Mammary epithelial cell (primary cell): ENCODE measurements at regions of chr2 and their contacts with region 1.

Region 1: GRCh38 chr2:26244309-26245121 is at the starts of genes HADHA and HADHB:
- DNase-seq: peak; percentile 90
- H3K4me3 ChIP-seq: peak within 1 kb of the TSS; percentile 89 to 94 (median 91)
- H3K27ac ChIP-seq: peak within 1 kb of the TSS; percentile 88
- H3K4me1 ChIP-seq: peaks cover 18% of the 10 kb centered on the region
- H3K27me3 ChIP-seq: no peaks in the 10 kb centered on the region
- CTCF ChIP-seq: peak; percentile 4 to 40
- total RNA-seq, gene HADHA: 155 to 174 TPM
- total RNA-seq, gene HADHB: 126 to 144 TPM

Region 2: DNA sequence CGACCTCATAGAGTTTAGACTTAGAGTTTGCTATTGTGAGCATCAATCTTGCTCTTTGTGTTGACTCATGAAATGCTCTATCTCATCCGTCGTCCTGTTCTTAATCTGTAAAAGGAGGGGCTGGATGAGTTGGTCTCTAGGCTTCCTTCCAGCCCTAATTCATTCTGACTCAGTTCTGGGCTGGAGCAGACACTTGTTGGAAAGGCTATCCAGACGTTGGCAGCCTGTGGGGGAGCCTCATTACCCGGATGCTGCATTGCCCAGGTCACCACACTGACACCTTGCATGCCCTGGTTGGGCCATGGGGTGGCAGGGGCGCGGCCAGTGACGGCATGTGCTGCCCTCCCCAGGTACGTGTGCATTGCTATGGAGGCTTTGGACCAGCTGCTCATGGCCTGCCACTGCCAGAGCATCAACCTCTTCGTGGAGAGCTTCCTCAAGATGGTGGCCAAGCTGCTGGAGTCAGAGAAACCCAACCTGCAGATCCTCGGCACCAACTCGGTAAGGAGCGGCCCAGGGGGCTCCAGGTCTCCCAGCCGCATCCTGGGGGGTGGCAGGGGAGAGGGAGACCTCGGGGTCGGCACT is 1141.1 kb before region 1 on chr2:
- CTCF ChIA-PET with region 1: no interaction called
- dilution Hi-C with region 1: no loop called
- in situ Hi-C with region 1: no loop called
- intact Hi-C with region 1: no loop called
- DNase-seq: peak; percentile 50
- H3K4me3 ChIP-seq: no peak overlapping the region
- H3K27ac ChIP-seq: no peak overlapping the region
- H3K4me1 ChIP-seq: peaks cover 15% of the 10 kb centered on the region
- H3K27me3 ChIP-seq: no peaks in the 10 kb centered on the region
- CTCF ChIP-seq: no peak

Region 3: GRCh38 chr2:26274058-26274613 is 29.6 kb after region 1 on chr2:
- CTCF ChIA-PET with region 1: no interaction called
- dilution Hi-C with region 1: no loop called
- in situ Hi-C with region 1: no loop called
- intact Hi-C with region 1: loop called (anchors 1 kb)
- DNase-seq: peak; percentile 100
- H3K4me3 ChIP-seq: no peak overlapping the region
- H3K27ac ChIP-seq: peak overlapping the region; percentile 97
- H3K4me1 ChIP-seq: peaks cover 37% of the 10 kb centered on the region
- H3K27me3 ChIP-seq: no peaks in the 10 kb centered on the region
- CTCF ChIP-seq: no peak

Region 4: GRCh38 chr2:26299471-26300101 is 55.1 kb after region 1 on chr2:
- CTCF ChIA-PET with region 1: interaction called, 5 read pairs
- dilution Hi-C with region 1: no loop called
- in situ Hi-C with region 1: no loop called
- intact Hi-C with region 1: loop called (anchors 1 kb)
- DNase-seq: peak; percentile 60
- H3K4me3 ChIP-seq: peak overlapping the region; percentile 40 to 54 (median 45)
- H3K27ac ChIP-seq: peak overlapping the region; percentile 60
- H3K4me1 ChIP-seq: peaks cover 39% of the 10 kb centered on the region
- H3K27me3 ChIP-seq: no peaks in the 10 kb centered on the region
- CTCF ChIP-seq: no peak

Region 5: GRCh38 chr2:26330113-26330549 is 85.6 kb after region 1 on chr2:
- CTCF ChIA-PET with region 1: interaction called, 5 read pairs
- dilution Hi-C with region 1: no loop called
- in situ Hi-C with region 1: loop called in 1 of 2 experiments (anchors 10 kb)
- intact Hi-C with region 1: loop called (anchors 1 kb)
- DNase-seq: peak; percentile 76
- H3K4me3 ChIP-seq: no peak overlapping the region
- H3K27ac ChIP-seq: no peak overlapping the region
- H3K4me1 ChIP-seq: peaks cover 10% of the 10 kb centered on the region
- H3K27me3 ChIP-seq: no peaks in the 10 kb centered on the region
- CTCF ChIP-seq: peak; percentile 94 to 95

Region 6: DNA sequence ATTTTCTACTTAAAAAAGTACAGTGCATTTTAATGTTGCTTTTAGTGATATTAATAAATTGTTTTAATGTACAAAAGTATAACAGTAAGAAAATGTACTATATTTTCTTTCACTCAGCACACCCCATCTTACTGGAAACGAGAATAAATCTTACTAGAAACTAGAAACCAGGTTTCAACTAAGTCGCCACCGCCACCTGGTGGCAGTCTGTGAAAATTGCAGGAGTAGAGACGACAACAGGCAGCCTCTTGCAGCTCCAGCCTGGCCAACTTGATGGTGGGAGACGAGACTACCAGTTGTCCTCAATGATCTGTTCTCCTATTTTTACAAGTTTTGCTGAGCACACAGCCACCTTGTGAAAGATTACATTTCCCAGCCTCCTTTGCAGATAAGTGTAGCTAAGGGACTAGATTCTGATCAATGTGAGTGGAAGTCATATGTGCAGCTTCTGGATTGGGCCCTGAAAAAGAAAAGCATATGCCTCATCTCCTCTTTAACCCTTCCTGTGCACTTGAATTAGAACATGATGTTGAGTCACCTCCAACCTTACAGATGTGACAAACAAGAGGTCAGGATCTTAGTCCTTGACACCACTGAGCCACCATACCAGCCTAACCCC is 224.7 kb after region 1 on chr2:
- CTCF ChIA-PET with region 1: no interaction called
- dilution Hi-C with region 1: no loop called
- in situ Hi-C with region 1: loop called in 1 of 2 experiments (anchors 25 kb)
- intact Hi-C with region 1: no loop called
- DNase-seq: peak; percentile 45
- H3K4me3 ChIP-seq: no peak overlapping the region
- H3K27ac ChIP-seq: no peak overlapping the region
- H3K4me1 ChIP-seq: no peaks in the 10 kb centered on the region
- H3K27me3 ChIP-seq: no peaks in the 10 kb centered on the region
- CTCF ChIP-seq: peak; percentile 80 to 88

Region 7: GRCh38 chr2:26569216-26570082 is 324.9 kb after region 1 on chr2:
- CTCF ChIA-PET with region 1: no interaction called
- dilution Hi-C with region 1: no loop called
- in situ Hi-C with region 1: no loop called
- intact Hi-C with region 1: loop called (anchors 5 kb)
- DNase-seq: no peak
- H3K4me3 ChIP-seq: no peak overlapping the region
- H3K27ac ChIP-seq: no peak overlapping the region
- H3K4me1 ChIP-seq: no peaks in the 10 kb centered on the region
- H3K27me3 ChIP-seq: no peaks in the 10 kb centered on the region
- CTCF ChIP-seq: no peak